Activated T-helper 1 cell treated with anti-CD3 and anti-CD28 coated beads, Interleukin-12 subunit alpha, Interleukin-12 subunit beta, Interleukin-2, Interleukin-4 antibody, amounts not matched to agents 30 ng/mL and 10 ng/mL and 1 ng/mL, durations not matched to agents 14 hours and 24 hours and 36 hours (primary cell): ENCODE measurements at regions of chr6 and their contacts with region 1.

Region 1: DNA sequence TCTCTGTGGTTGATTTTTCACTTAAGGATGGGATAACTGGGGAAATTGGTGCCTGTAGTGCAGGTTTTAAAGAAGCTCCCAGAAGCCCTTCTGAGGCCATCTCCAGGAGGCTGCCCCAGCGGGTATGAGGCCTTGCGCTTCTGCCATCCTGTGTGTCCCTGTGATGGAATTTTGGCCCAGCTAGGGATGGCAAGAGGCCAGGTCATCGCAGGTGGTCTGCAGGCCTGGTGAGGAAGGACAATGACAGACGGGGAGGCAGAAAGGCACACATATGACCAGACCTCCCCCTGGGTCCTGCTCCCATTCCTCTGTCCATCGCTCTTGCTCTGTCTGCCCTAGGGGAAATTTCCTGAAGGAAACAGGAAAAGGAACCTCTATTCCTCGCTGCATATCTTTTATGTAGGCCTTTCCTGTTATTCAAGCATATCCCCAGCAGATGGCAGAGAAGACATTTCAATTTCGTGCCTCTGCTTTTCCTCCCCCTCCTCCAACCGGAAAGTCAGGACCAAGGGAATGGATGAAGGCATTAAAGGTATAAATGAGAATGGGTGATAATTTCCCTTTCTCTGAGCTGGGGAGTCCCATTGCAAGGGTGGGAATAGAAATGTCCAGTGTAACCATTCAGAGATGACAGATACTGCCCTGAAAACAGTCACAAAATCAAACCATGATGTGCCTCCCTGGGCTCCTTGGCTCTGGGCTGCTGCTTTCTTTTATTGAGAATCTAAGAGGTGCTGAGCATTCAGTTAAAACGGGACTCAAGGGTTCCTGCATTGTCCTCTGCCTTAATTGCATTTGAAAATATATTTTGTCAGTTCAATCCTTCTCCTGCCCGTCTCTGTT is 17.6 kb upstream of the HLA-F start:
- DNase-seq: no peak
- H3K4me3 Mint-ChIP-seq: no peak overlapping the region
- H3K27ac Mint-ChIP-seq: no peak overlapping the region
- H3K4me1 Mint-ChIP-seq: peaks cover 60% of the 10 kb centered on the region
- H3K27me3 Mint-ChIP-seq: peaks cover 30% of the 10 kb centered on the region

Region 2: DNA sequence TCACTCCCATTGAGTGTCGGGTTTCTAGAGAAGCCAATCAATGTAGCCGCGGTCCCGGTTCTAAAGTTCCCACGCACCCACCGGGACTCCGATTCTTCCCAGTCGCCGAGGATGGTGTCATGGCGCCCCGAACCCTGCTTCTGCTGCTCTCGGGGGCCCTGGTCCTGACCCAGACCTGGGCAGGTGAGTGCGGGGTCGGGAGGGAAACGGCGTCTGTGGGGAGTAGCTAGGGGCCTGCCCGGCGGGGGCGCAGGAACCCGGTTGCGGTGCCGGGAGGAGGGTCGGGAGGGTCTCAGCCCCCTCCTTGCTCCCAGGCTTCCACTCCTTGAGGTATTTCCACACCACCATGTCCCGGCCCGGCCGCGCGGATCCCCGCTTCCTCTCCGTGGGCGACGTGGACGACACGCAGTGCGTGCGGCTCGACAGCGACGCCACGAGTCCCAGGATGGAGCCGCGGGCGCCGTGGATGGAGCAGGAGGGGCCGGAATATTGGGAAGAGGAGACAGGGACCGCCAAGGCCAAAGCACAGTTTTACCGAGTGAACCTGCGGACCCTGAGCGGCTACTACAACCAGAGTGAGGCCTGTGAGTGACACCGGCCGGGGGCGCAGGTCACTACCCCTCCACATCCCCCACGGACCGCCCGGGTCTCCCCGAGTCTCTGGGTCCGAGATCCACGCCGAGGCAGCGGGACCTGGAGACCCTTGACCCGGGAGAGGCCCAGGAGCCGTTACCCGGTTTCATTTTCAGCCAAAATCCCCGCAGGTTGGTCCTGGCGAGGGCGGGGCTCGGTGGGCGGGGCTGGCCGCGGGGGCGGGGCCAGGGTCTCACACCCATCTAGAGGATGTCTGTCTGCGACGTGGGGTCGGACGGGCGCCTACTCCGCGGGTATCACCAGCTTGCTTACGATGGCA is 86.8 kb after region 1 on chr6:
- intact Hi-C with region 1: loop called (anchors 2 kb)
- DNase-seq: peak; percentile 69
- H3K4me3 Mint-ChIP-seq: peak overlapping the region; percentile 86
- H3K27ac Mint-ChIP-seq: peak overlapping the region; percentile 64
- H3K4me1 Mint-ChIP-seq: peaks cover 13% of the 10 kb centered on the region
- H3K27me3 Mint-ChIP-seq: peaks cover 49% of the 10 kb centered on the region

Region 3: DNA sequence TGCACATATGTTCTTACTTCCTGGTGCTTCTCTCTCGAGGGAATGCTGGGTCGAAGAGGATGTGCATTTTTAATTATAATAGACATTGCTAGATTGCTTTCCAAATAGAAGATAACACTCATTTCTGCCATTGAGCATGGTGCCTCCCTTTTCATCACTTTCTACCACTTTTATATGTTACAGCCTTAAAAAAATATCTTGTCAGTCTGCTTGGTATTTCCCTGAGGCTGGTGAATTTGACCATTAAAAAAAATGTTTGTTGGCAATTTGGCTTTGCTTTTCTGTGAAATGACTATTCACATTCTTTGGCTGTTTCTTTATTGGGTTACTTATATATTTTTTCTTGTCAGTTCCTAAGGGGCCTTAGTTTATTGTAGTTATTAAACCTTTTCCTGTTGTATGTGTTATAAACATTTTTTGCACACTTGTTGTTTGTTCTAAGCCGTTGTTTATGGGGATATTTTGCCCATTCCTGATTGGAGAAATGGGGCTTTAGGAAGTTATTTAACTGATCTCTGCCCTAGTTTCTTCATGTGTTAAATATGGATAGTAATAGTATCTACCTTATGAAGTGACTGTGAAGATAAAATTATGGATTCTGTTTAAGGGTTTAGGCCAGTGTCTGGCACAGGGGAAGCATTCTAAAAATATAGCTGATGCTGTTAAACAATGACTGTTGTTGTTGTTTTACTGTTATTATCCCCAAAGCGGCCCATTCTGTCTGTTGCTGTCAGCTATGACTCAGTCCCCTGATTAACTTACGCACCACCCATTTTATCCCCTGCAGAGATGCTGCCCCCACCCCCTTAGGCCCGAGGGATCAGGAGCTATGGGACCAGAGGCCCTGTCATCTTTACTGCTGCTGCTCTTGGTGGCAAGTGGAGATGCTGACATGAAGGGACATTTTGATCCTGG is 1182.5 kb after region 1 on chr6:
- intact Hi-C with region 1: no loop called
- DNase-seq: no peak
- H3K4me3 Mint-ChIP-seq: no peak overlapping the region
- H3K27ac Mint-ChIP-seq: no peak overlapping the region
- H3K4me1 Mint-ChIP-seq: peaks cover 29% of the 10 kb centered on the region
- H3K27me3 Mint-ChIP-seq: no peaks in the 10 kb centered on the region